MCF 10A (cell line): ENCODE measurements at regions of chr1 and their contacts with region 1.

Region 1: DNA sequence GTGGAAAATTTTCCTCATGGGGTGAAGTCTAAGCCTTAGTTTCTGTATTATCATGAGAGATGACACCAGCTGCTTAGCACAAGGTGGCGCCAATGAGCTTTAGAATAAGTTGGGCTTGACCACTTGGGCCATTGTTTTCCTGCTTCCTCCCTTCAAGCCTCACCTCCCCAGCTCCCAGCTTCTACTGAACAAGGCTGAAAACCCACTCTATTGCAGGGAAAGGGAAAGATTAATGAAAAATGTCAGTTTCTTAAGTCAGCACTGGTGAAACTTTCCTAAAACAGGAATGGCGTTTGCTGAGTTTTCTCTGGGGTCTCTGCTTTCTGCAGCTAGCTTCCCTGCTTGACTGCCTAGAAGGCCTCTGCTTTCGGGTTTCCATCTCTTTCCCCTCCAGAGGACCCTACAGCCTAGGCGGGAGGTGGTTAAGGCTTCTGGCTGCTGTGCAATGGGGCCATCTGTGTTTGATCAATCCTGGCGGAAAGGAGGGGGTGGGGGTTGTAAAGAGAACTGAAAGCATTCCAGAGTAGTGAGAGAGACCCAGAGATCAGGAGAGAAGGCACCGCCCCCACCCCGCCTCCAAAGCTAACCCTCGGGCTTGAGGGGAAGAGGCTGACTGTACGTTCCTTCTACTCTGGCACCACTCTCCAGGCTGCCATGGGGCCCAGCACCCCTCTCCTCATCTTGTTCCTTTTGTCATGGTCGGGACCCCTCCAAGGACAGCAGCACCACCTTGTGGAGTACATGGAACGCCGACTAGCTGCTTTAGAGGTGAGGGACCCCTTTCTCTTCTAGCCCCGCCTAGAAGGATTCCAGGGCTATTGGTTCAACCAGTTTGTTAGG is at the start of gene OLFML3:
- DNase-seq: peak; percentile 89
- H3K4me3 Mint-ChIP-seq: no peak within 1 kb of the TSS
- H3K27ac Mint-ChIP-seq: no peak within 1 kb of the TSS
- H3K4me1 Mint-ChIP-seq: peaks cover 29% of the 10 kb centered on the region
- H3K27me3 Mint-ChIP-seq: no peaks in the 10 kb centered on the region
- CTCF ChIP-seq: peak; percentile 53
- total RNA-seq, gene OLFML3: 0.20 and 0.30 TPM in 2 replicates

Region 2: GRCh38 chr1:113835642-113836307 is 143.3 kb before region 1 on chr1:
- CTCF ChIA-PET with region 1: interaction called, 10 read pairs
- POLR2A ChIA-PET with region 1: no interaction called
- intact Hi-C with region 1: loop called (anchors 10 kb)
- DNase-seq: peak; percentile 72
- H3K4me3 Mint-ChIP-seq: no peak overlapping the region
- H3K27ac Mint-ChIP-seq: no peak overlapping the region
- H3K4me1 Mint-ChIP-seq: no peaks in the 10 kb centered on the region
- H3K27me3 Mint-ChIP-seq: no peaks in the 10 kb centered on the region
- CTCF ChIP-seq: peak; percentile 50

Region 3: GRCh38 chr1:113874012-113874879 is 104.8 kb before region 1 on chr1:
- CTCF ChIA-PET with region 1: no interaction called
- POLR2A ChIA-PET with region 1: no interaction called
- intact Hi-C with region 1: no loop called
- DNase-seq: peak; percentile 44
- H3K4me3 Mint-ChIP-seq: no peak overlapping the region
- H3K27ac Mint-ChIP-seq: no peak overlapping the region
- H3K4me1 Mint-ChIP-seq: peaks cover 6% of the 10 kb centered on the region
- H3K27me3 Mint-ChIP-seq: no peaks in the 10 kb centered on the region
- CTCF ChIP-seq: peak; percentile 20

Region 4: DNA sequence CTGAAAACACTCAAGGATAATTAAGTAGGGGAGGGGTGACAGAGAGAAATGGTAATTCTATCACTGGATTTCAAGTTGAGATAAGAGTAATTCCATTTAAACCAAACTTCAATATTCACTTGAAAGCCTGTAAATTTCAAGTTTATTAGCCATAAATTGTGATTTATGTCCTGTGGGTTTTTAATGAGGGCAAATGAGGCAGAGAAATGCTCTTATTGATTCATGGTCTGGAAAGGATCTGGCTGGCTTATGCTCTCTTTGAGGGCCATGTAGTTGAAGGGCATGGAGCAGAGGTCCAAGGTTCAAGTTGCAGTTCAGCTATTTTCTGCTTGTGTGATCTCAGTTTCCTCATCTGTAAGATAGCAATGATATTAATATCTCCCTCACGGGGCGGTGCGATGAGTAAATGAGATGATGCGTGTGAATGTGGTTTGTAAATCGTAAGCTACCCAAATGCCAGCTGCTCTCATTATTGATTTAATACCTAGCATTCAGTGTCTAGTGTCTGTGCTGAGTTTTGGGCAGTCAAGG is 12.4 kb after region 1 on chr1:
- CTCF ChIA-PET with region 1: interaction called, 12 read pairs
- POLR2A ChIA-PET with region 1: no interaction called
- intact Hi-C with region 1: no loop called
- DNase-seq: no peak
- H3K4me3 Mint-ChIP-seq: no peak overlapping the region
- H3K27ac Mint-ChIP-seq: no peak overlapping the region
- H3K4me1 Mint-ChIP-seq: no peaks in the 10 kb centered on the region
- H3K27me3 Mint-ChIP-seq: no peaks in the 10 kb centered on the region
- CTCF ChIP-seq: no peak

Region 5: GRCh38 chr1:114093624-114094376 is 114.7 kb after region 1 on chr1:
- CTCF ChIA-PET with region 1: interaction called, 6 read pairs
- POLR2A ChIA-PET with region 1: interaction called, 5 read pairs
- intact Hi-C with region 1: loop called (anchors 2 kb)
- DNase-seq: peak; percentile 45
- H3K4me3 Mint-ChIP-seq: no peak overlapping the region
- H3K27ac Mint-ChIP-seq: no peak overlapping the region
- H3K4me1 Mint-ChIP-seq: peaks cover 11% of the 10 kb centered on the region
- H3K27me3 Mint-ChIP-seq: peaks cover 46% of the 10 kb centered on the region
- CTCF ChIP-seq: peak; percentile 23

Region 6: GRCh38 chr1:114219172-114219868 is 240.2 kb after region 1 on chr1:
- CTCF ChIA-PET with region 1: interaction called, 6 read pairs
- POLR2A ChIA-PET with region 1: no interaction called
- intact Hi-C with region 1: loop called (anchors 2 kb)
- DNase-seq: peak; percentile 19
- H3K4me3 Mint-ChIP-seq: no peak overlapping the region
- H3K27ac Mint-ChIP-seq: no peak overlapping the region
- H3K4me1 Mint-ChIP-seq: no peaks in the 10 kb centered on the region
- H3K27me3 Mint-ChIP-seq: no peaks in the 10 kb centered on the region
- CTCF ChIP-seq: no peak

Region 7: GRCh38 chr1:114346480-114347029 is 367.5 kb after region 1 on chr1:
- CTCF ChIA-PET with region 1: interaction called, 3 read pairs
- POLR2A ChIA-PET with region 1: no interaction called
- intact Hi-C with region 1: loop called (anchors 1 kb)
- DNase-seq: peak; percentile 93
- H3K4me3 Mint-ChIP-seq: peak overlapping the region; percentile 84
- H3K27ac Mint-ChIP-seq: peak overlapping the region; percentile 85
- H3K4me1 Mint-ChIP-seq: peaks cover 4% of the 10 kb centered on the region
- H3K27me3 Mint-ChIP-seq: no peaks in the 10 kb centered on the region
- CTCF ChIP-seq: peak; percentile 100